ENCODE measurements at regions of chr3 and their contacts with region 1.

Region 1: GRCh38 chr3:5731094-5731493 is 543.6 kb downstream of the EDEM1 start:
- DNase-seq: peak; percentile 2
- H3K4me3 ChIP-seq: no peak overlapping the region
- H3K27ac ChIP-seq: no peak overlapping the region
- H3K4me1 ChIP-seq: no peaks in the 10 kb centered on the region
- CTCF ChIP-seq: peak; percentile 51

Region 2: DNA sequence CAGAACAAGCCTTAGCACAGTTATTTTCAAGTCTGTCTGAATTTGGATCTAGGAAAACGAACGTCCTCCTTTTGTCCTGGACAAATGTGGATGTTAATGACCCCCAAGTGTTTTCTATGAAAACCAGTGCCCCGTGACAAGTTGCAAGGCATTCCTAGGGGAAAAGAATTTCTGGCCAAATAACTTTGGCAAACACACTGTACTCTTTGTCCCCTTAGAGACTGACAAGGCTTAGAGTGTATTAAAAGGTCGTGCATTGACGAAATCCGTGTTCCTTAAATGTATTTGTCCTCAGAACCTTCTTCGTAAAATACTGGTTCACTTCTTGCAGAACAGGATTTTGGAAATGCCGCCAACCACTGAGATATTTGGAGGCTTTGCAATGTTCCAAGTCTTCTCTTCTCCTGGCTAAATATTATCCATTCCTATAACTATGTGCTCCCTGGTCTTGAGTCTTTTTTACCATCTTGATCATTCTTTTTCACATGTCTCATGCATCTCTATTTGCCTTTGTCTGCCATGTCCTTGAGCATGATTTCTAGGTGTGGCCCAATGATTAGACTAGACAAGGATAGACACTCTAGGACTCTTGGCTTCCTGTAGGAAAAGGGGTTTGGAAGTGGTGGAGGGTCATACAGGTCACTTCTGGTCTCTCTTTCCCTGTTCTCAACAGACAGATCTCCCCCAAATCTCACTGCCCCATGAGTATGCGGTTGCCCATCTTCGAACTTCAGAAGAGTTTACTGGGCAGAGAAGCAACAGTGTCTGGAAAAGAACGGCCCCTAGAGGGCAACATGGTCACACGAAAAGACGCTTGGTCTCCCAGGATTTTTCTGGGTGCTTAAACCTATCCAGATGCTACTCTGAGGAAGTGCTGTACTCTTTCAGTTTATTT is 426.1 kb before region 1 on chr3:
- CTCF ChIA-PET with region 1: no interaction called
- POLR2A ChIA-PET with region 1: no interaction called
- intact Hi-C with region 1: loop called (anchors 5 kb)
- DNase-seq: peak; percentile 59
- H3K4me3 ChIP-seq: no peak overlapping the region
- H3K27ac ChIP-seq: no peak overlapping the region
- H3K4me1 ChIP-seq: no peaks in the 10 kb centered on the region
- CTCF ChIP-seq: peak; percentile 85

Region 3: GRCh38 chr3:5657106-5657505 is 74.0 kb before region 1 on chr3:
- CTCF ChIA-PET with region 1: no interaction called
- POLR2A ChIA-PET with region 1: no interaction called
- intact Hi-C with region 1: no loop called
- DNase-seq: no peak
- H3K4me3 ChIP-seq: no peak overlapping the region
- H3K27ac ChIP-seq: no peak overlapping the region
- H3K4me1 ChIP-seq: no peaks in the 10 kb centered on the region
- CTCF ChIP-seq: no peak

Measured in OCI-LY7 (cell line).